Aorta (tissue), 5 donors: ENCODE measurements at regions of chr6 and their contacts with region 1.

Region 1: GRCh38 chr6:118283766-118284165 is 264.3 kb upstream of the PLN start:
- DNase-seq: no peak
- ATAC-seq: peak; percentile 78
- H3K4me3 ChIP-seq: no peak overlapping the region
- H3K27ac ChIP-seq: no peak overlapping the region
- H3K4me1 ChIP-seq: peaks cover 2 to 12% of the 10 kb centered on the region in 2 donors
- H3K27me3 ChIP-seq: no peaks in the 10 kb centered on the region

Region 2: DNA sequence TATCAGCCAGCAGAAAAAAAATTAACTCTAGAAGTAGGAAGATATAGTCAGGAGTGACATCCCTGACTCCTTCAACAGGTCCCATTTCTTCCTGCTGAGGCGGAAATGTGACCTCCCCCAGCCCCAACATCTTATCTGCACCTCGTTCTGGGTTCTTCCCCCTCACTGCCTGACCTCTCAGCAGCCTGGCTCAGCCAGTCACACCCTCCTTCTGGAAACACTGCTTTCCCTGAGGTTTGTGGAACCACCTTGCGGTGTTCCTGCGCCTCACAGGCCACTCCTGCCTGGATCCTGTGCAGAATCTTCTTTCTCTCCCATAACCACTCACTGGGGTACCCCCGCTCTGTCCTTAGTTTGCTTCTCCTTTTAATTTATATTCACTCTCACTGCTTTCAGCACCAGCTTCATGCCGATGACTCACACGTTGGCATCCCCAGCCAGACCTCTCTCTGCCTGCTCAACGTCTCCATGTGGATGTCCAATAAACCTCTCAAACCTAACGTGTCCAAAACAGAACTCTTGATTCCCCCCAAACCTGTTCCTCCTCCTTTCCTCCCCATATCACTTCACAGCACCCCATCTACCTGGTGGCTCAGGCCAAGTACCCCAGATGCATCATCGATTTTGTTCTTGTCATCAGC is 41.6 kb after region 1 on chr6:
- intact Hi-C with region 1: loop called in 1 of 2 experiments (anchors 5 kb)
- DNase-seq: peak; percentile 76 to 85
- ATAC-seq: peak; percentile 70
- H3K4me3 ChIP-seq: no peak overlapping the region
- H3K27ac ChIP-seq: peak overlapping the region in 1 of 2 donors; percentile 58
- H3K4me1 ChIP-seq: peaks cover 2 to 13% of the 10 kb centered on the region in 2 donors
- H3K27me3 ChIP-seq: no peaks in the 10 kb centered on the region

Region 3: DNA sequence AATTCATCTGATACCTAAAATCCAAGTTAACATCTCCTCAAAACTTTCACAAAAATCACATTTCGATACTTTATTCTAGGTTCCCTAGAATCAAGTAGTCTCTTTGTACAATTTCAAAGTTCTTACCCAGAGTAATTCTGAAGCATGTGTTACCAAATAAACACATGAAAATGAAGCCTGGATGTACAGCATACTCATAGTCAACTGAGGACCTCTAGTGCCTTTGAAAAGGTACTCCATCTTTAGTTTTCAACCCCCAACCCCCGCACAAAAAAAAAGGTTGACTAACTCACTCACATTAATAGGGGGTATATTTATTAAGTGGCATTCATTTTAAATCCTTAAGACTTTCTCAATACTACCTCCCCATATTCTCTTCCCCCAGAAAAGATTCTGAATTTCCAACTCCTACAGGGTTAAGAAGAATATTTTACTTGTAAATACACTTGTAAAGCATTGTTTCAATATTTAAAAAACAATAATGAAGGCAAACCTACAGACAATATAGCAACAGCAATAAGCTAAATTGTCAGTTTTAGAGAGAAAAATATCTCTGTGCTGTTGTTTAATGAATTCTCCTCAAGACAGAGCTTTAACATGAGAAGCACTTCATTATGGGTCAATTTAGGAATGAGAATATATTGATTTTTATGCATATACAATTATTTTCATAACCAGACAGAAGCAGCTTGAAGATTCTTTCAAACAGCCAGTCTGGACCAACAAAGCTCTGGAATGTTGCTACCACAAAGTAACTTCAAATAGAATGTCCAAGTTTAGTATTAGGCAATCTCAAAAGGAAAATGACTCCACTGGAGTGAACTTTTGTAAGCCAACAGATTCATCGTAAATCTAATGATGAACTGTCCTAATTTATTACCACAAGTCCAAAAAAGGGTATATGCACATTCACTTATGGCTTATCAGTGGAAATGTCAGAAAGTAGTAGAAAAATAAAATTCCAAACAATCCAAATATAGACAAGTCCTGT is 267.6 kb after region 1 on chr6:
- intact Hi-C with region 1: loop called in 1 of 2 experiments (anchors 5 kb)
- DNase-seq: no peak
- ATAC-seq: peak; percentile 67
- H3K4me3 ChIP-seq: peak overlapping the region; percentile 93 to 98
- H3K27ac ChIP-seq: no peak overlapping the region
- H3K4me1 ChIP-seq: no peaks in the 10 kb centered on the region
- H3K27me3 ChIP-seq: no peaks in the 10 kb centered on the region

Region 4: DNA sequence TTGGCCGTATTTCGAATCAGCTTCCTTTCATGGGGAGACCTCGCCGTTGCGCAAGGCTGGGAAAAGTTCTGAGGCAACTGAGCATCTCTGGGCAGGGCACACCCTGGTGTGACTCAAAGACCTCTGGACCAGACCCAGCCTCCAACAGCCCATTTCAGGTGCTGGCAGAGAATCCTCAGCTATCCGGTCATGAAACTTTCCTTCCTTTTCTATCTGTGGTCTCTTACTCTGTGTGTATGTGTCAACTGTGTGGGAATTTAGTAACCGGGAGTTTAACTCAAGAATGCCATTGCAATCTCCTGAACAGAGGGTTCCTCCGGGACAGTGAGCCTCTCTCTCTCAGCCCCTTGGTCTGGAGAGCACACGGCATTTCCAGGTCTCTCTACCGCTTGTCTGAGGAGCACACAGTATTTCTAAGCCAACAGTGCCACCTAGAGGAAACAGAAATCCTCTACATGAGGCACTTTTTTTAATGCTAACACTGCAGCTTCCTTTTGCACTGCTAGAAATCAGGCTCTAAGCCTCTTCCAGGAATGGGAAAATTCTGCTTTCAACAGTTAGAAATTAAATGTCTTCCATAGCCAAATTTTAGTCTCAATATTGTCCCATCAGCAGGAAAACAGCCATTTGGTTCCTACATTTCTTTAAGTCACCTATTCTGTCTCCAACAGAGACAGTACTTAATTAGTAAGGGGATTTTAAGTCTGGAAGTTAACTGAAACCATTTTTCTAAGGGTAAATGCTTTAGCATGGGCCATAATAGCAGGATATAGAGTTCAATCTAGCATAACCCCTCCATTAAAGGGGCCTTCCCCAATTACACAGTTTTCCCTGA is 297.0 kb after region 1 on chr6:
- intact Hi-C with region 1: loop called (anchors 2 to 5 kb)
- DNase-seq: peak in 1 of 2 donors; percentile 69
- ATAC-seq: peak; percentile 93
- H3K4me3 ChIP-seq: no peak overlapping the region
- H3K27ac ChIP-seq: no peak overlapping the region
- H3K4me1 ChIP-seq: no peaks in the 10 kb centered on the region
- H3K27me3 ChIP-seq: no peaks in the 10 kb centered on the region

Region 5: GRCh38 chr6:118776607-118777549 is 493.1 kb after region 1 on chr6:
- intact Hi-C with region 1: loop called (anchors 5 kb)
- DNase-seq: peak in 1 of 2 donors; percentile 73
- ATAC-seq: peak; percentile 83
- H3K4me3 ChIP-seq: no peak overlapping the region
- H3K27ac ChIP-seq: no peak overlapping the region
- H3K4me1 ChIP-seq: no peaks in the 10 kb centered on the region
- H3K27me3 ChIP-seq: no peaks in the 10 kb centered on the region